ENCODE measurements at regions of chr11 and their contacts with region 1.

Region 1: DNA sequence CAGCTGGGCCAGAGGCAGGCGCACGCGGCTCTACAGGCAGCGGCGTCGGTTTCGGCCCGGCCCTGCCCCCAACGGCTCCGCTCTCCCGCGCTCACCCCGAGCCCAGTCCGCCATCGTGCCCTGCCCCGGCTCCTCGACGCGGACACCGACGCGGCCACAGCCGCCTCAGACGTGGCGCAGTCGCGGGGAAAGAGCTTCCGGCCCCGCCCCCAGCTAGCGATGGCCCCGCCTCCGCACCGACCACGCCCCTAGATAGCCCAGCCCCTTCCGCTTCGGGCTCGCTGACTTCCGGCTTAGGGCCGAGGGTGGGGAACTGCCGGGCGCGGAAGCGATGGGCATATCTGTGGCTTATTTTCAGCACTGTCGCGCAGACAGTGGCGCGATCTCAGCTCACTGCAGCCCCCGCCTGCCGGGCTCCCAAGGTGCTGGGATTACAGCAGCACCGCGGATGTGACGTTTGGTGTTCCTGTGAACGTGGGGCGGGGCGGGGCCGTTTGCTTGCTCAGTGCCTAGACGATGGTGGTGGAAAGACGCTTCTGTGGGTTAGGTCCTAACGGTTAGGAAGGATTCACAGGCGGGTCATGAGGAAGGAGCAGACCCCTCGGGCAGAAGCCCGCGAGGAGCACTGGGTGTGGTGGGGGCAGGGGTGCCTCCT is at the starts of genes BET1L and RIC8A:
- DNase-seq: peak; percentile 90 to 99 (median 97)
- ATAC-seq: peak; percentile 76 to 86
- H3K4me3 Mint-ChIP-seq: peak within 1 kb of the TSS; percentile 86 to 99 (median 96)
- H3K27ac Mint-ChIP-seq: peak within 1 kb of the TSS; percentile 96 to 100 (median 99)
- H3K4me1 Mint-ChIP-seq: peaks cover 20 to 64% (median 62%) of the 10 kb centered on the region in 4 donors
- H3K27me3 Mint-ChIP-seq: no peaks in the 10 kb centered on the region
- polyA plus RNA-seq, gene BET1L: 24.0 to 75.2 (median 59.2) TPM
- polyA plus RNA-seq, gene RIC8A: 68.6 to 93.1 (median 76.7) TPM

Region 2: DNA sequence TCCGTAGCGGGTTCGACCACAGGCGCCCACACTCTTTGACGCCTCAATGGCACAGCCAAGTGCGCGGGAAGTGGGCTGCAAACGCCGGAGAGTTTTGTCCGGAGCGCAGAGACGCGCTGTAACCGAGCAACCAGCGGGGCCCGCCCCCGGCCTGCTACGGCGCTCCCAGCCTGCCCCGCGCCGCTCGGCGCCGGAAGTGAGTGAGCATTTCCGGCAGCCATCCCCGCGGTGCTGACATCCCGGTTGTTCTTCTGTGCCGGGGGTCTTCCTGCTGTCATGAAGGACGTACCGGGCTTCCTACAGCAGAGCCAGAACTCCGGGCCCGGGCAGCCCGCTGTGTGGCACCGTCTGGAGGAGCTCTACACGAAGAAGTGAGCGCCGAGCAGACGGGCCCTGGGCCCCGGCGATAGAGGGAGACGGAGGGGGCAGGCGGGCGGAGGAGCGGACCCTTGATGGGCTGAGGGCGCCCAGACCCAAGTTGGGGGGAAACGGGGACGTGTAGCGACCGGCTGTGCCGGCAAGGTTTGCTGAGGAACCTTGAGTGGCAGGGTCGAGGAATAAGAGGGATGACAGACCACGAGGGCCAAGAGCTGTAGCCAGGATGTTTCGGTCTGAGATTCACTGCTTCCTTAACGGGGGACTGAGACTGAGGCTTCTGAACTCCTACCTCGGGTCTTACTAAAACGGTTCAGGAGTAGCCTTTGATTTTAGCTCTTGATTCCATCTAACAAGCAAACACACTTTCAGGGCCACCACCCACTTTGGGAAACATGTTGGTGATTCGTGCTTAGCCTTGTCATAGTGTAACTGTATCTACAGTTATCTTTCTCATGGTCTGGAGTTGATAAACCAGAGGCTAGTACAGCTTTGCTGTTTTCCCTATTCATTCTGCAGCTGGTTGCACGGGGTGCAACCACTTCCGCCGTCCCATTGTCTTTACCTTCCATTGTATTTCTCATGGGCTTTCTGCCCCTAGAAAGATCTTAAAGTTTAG is 29.7 kb after region 1 on chr11 and contains the start of gene PSMD13:
- POLR2A ChIA-PET with region 1: interaction called, 76 read pairs
- DNase-seq: peak; percentile 82 to 91 (median 86)
- ATAC-seq: peak; percentile 80 to 83
- H3K4me3 Mint-ChIP-seq: peak within 1 kb of the TSS; percentile 93 to 99 (median 98)
- H3K27ac Mint-ChIP-seq: peak within 1 kb of the TSS; percentile 89 to 100 (median 100)
- H3K4me1 Mint-ChIP-seq: peaks cover 20 to 61% (median 46%) of the 10 kb centered on the region in 4 donors
- H3K27me3 Mint-ChIP-seq: no peaks in the 10 kb centered on the region
- polyA plus RNA-seq, gene PSMD13: 196 to 223 (median 208) TPM

Region 3: DNA sequence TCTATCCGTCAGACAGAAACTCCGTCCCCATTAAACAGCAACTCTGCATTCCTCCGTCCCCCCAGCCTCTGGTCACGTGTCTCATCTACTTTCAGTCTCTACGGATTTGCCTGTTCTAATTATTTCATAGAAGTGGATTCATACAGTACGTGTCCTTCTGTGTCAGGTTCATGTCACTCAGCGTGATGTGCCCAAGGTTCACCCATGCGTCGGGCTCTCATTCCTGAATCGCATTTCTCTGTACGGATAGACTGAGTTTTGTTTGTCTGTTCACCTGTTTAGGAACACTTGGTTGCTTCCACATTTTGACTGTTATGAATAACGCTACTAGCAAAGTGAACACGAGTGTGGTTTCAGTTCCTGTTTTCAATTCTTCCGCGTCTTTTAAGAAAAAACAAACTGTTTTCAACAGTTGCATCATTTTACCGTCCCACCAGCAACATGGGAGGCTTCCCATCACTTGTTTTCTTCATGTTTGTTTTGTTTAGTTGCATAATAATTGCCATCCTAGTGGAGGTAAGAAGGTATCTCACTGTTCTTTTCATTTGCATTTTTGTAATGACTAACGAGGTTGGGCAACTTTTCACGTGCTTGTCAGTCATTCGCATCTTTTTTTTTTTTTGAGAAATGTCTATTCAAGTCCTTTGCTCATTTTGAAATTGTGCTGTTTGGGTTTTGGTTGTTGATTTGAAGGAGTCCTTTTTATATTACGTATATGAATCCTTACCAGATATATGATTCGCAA is 62.0 kb after region 1 on chr11:
- POLR2A ChIA-PET with region 1: interaction called, 46 read pairs
- DNase-seq: peak in 9 of 10 donors; percentile 49 to 91 (median 74)
- ATAC-seq: peak; percentile 55 to 79
- H3K4me3 Mint-ChIP-seq: peak overlapping the region; percentile 84 to 94 (median 88)
- H3K27ac Mint-ChIP-seq: peak overlapping the region; percentile 96 to 99 (median 98)
- H3K4me1 Mint-ChIP-seq: peaks cover 11 to 42% (median 36%) of the 10 kb centered on the region in 4 donors
- H3K27me3 Mint-ChIP-seq: no peaks in the 10 kb centered on the region

Region 4: DNA sequence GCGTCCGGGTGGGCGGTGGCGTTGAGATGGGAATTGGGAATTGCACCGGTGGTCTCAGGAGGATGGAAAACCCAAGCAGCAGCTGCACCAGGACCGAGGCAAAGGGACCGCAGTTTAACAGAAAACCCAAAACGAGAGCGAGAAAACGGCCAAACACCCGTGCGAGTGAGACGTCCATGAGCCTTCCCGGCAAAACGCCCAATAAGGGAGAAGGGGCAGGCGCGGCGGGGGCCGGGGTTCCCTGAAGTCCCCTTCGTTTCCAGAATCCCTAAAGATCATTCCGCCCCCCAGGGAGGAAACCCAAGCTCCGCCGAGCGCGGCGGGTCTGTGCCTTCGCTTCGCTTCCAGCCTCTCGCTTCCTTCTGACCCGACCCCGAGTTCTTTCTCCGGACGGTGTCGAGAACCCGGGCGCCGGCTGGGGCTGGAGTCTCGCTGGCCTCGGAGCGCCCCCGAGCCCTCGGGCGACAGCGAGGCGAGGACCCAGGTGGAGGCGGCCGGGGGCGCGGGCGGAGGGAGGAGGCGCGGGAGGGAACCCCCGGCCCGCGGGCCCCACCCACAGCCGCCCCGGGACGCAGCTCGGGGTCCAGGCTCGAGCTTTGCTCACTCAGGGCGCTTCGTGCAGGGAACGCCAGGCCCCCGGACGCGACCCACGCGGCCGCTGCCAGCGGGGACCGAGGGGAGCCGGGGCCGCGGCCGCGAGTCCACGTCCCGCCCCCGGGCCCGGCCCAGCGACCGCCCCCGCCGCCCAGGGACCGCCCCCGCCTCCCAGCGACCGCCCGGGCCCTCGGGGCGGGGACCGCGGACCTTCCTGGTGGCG is 81.2 kb after region 1 on chr11 and contains the start of gene PGGHG:
- POLR2A ChIA-PET with region 1: interaction called, 78 read pairs
- DNase-seq: peak in 9 of 10 donors; percentile 2 to 75 (median 58)
- ATAC-seq: peak; percentile 17 to 28
- H3K4me3 Mint-ChIP-seq: peak within 1 kb of the TSS; percentile 93 to 100 (median 97)
- H3K27ac Mint-ChIP-seq: peak within 1 kb of the TSS; percentile 93 to 99 (median 98)
- H3K4me1 Mint-ChIP-seq: peaks cover 27 to 56% (median 41%) of the 10 kb centered on the region in 4 donors
- H3K27me3 Mint-ChIP-seq: no peaks in the 10 kb centered on the region
- polyA plus RNA-seq, gene PGGHG: 8.1 to 14.9 (median 11.2) TPM

Region 5: DNA sequence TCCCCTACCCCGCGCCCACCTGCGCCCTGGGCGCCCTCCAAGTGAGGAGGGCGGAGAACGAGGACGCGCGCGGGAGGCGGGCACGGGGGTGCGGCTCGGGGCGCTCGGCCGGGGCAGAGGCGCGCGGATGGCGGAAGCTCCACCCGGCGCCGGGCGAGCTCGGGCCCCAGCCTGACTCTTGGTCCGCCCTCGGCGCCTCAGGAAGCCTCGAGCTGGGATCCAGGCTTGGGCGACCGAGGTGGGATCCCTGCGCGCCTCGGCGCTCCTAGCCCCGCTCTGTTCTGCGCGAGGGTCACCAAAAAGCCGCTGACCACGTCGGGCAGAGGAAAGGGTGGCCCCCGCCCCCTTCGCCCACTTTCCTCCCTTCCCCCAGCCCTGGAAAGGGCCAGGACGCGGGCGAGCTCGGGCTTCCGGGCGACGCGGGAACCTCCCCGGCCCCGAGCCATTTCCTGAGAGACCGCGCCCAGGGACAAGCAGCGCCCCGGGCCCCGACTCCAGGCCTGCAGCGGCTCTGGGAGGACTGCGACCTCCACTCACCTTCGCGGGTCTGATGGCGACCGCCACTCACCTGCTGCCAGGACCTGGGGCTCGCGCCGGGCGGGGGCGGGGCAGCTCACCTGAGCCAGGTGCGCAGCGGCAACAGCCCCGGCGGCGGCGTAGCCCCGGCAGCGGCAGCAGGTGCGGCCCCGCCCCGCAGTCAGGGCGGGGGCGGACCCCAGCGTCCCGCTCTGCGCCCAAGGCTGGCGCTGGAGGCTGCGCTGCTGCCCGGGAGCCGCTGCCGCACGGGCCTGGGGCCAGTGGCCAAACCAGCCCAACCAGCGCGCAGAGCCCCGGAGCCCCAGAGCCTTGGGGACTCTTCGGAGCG is 209.7 kb after region 1 on chr11:
- POLR2A ChIA-PET with region 1: interaction called, 15 read pairs
- DNase-seq: peak in 6 of 10 donors; percentile 13 to 52 (median 45)
- ATAC-seq: peak; percentile 20 to 33
- H3K4me3 Mint-ChIP-seq: peak overlapping the region in 9 of 10 donors; percentile 92 to 100 (median 98)
- H3K27ac Mint-ChIP-seq: peak overlapping the region in 3 of 10 donors; percentile 31 to 95 (median 92)
- H3K4me1 Mint-ChIP-seq: peaks cover 9 to 44% (median 32%) of the 10 kb centered on the region in 4 donors
- H3K27me3 Mint-ChIP-seq: no peaks in the 10 kb centered on the region

Region 6: DNA sequence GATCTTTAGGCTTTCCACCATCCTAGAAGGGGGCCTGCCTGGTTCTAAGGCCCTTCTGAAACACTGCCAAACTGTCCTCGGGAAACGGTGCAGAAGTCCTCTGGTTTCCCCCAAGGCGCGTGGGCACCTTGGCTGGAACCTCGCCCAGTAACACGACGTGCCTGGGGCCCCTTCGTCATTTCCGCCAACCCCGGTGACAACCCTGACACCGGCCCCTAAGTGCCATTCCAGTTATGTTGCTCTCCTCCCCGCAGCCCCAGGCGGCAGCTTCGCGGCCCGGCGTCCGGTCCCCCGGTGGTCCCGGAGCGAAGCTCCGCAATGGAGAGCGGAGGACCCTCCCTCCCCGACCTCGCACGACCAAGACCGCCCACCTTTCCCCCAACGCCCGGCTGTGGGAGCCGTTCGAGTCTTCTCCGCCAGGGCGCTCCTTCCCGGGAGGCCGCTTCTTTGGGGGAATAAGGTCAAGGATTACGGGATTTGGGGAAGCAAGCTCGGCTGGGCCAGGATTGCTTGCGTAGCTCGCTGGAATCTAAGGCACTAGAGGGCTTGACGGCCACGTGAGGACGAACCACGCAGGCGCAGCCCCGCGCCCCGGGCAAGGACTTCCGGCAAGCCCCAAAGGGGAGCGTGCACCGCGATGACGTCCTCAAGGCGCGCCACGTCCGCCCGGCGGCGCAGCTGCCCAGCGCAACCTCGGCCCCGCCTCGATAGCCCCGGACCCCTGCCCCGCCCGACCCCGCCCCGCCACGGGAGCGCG is 299.1 kb after region 1 on chr11:
- POLR2A ChIA-PET with region 1: interaction called, 21 read pairs
- DNase-seq: peak; percentile 92 to 98 (median 96)
- ATAC-seq: peak; percentile 75 to 76
- H3K4me3 Mint-ChIP-seq: peak overlapping the region; percentile 95 to 99 (median 98)
- H3K27ac Mint-ChIP-seq: peak overlapping the region; percentile 97 to 100 (median 100)
- H3K4me1 Mint-ChIP-seq: peaks cover 8 to 40% (median 25%) of the 10 kb centered on the region in 4 donors
- H3K27me3 Mint-ChIP-seq: no peaks in the 10 kb centered on the region

Measured in naive thymus-derived CD8-positive, alpha-beta T cell (primary cell).